Adrenal gland (tissue), 19 donors: ENCODE measurements at regions of chr11 and their contacts with region 1.

Region 1: DNA sequence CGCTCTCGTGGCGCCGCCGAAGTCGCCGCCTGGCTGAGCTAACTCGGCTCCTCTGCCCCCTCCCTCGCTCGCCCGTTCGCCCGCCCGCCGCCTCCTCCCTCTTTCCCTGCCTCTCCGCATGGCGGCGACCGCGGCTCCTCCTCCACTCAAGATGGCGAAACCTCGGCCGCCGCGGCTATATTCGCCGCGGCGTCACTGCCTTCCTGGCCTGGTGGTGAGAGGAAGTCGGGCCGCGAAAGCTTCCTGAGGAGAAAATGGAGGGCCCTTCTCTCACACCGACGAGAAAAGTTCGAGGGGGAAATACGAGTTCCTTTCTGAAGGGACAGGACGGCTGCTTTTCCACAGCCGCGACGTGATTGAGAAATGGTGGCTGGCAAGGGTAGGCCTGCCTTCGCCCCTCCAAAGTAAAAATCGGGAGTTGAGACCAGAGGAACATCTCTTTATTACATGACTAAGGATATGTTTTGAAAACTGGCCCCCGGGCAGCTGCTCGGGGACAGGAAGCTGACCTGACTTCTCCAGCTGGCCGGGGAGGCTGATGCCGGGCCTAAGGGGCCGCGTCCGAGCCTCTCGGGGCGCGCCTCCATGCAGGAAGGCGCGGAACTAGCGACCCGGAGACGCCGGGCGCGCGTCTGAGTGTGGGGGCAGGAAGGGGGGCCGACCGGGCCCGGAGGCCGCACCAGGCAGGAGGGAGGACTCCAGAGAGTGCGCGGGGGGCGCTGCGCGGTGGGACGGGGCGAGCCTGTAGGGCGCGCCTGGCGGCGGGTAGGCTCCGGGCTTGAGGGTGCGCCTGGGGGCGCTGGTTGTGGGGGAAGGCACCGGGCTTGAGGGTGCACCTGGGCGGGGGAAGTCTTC is at the start of gene DDX6:
- DNase-seq: peak; percentile 91 to 95 (median 93)
- H3K4me3 ChIP-seq: peak within 1 kb of the TSS; percentile 57 to 90 (median 77)
- H3K27ac ChIP-seq: peak within 1 kb of the TSS; percentile 98 to 100 (median 99)
- H3K4me1 ChIP-seq: peaks cover 16 to 32% of the 10 kb centered on the region in 2 donors
- H3K27me3 ChIP-seq: no peaks in the 10 kb centered on the region
- CTCF ChIP-seq: peak in 4 of 6 experiments; percentile 24 to 58 (median 32)
- POLR2A ChIP-seq: peak; percentile 86 to 90
- total RNA-seq, gene DDX6: 59.6 to 138 (median 97.3) TPM

Region 2: GRCh38 chr11:118895142-118896039 is 104.1 kb after region 1 on chr11:
- intact Hi-C with region 1: loop called (anchors 10 kb)
- DNase-seq: peak in 3 of 7 donors; percentile 11 to 57 (median 42)
- H3K4me3 ChIP-seq: no peak overlapping the region
- H3K27ac ChIP-seq: peak overlapping the region in 2 of 5 donors; percentile 8 to 14
- H3K4me1 ChIP-seq: peaks cover 1 to 18% of the 10 kb centered on the region in 2 donors
- H3K27me3 ChIP-seq: no peaks in the 10 kb centered on the region
- CTCF ChIP-seq: no peak
- POLR2A ChIP-seq: no peak

Region 3: GRCh38 chr11:118907051-118908042 is 116.0 kb after region 1 on chr11:
- intact Hi-C with region 1: loop called in 1 of 2 experiments (anchors 10 kb)
- DNase-seq: peak; percentile 83 to 96 (median 89)
- H3K4me3 ChIP-seq: no peak overlapping the region
- H3K27ac ChIP-seq: peak overlapping the region in 4 of 5 donors; percentile 15 to 98 (median 65)
- H3K4me1 ChIP-seq: peaks cover 36 to 49% of the 10 kb centered on the region in 2 donors
- H3K27me3 ChIP-seq: no peaks in the 10 kb centered on the region
- CTCF ChIP-seq: peak; percentile 82 to 99 (median 96)
- POLR2A ChIP-seq: peak in 1 of 2 donors; percentile 15